B cell (primary cell): ENCODE measurements at regions of chr7 and their contacts with region 1.

Region 1: GRCh38 chr7:150368096-150368883 is at the start of gene REPIN1:
- DNase-seq: peak; percentile 89
- ATAC-seq: peak; percentile 49
- H3K4me3 ChIP-seq: peak within 1 kb of the TSS; percentile 62 to 98 (median 82)
- H3K4me3 Mint-ChIP-seq: peak within 1 kb of the TSS; percentile 92
- H3K27ac ChIP-seq: peak within 1 kb of the TSS; percentile 98 to 99
- H3K27ac Mint-ChIP-seq: peak within 1 kb of the TSS; percentile 98
- H3K4me1 ChIP-seq: peaks cover 57 to 72% of the 10 kb centered on the region in 2 donors
- H3K4me1 Mint-ChIP-seq: peaks cover 69% of the 10 kb centered on the region
- H3K27me3 ChIP-seq: no peaks in the 10 kb centered on the region
- H3K27me3 Mint-ChIP-seq: no peaks in the 10 kb centered on the region
- CTCF ChIP-seq: no peak
- total RNA-seq, gene REPIN1: 190 and 193 TPM in 2 replicates

Region 2: DNA sequence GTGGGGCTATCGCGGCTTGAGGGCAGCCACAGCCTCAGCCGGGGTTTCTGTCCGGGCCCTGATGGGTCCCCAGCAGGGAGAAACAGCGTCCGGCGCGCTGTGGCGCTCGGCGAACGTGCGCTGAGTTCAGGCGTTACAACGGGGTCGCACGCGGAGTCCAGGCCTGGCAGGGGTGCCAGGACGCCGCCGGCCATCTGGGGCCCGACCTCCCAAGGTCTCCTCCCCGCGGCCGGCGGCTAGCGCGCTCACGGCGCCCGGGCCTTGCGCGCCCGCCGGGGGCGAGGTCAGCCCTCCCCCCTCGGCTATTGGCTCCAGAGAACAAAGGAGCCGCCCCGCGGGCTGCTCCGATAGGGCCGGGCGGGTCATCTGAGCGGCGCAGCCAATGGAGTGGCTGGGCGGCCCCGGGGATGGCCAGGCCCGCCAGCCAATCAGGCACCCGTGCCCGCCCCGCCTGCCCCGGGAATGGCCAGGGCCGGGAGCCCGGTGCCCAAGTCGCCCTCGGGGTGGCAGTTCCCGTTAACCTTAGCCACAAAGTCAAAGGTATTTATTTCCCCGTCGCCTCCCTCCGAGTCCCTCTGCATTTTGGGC is 10.7 kb after region 1 on chr7 and contains the start of gene ZNF775:
- CTCF ChIA-PET with region 1: interaction called, 20 read pairs
- POLR2A ChIA-PET with region 1: interaction called, 64 read pairs
- intact Hi-C with region 1: loop called (anchors 1 kb)
- DNase-seq: peak; percentile 93
- ATAC-seq: peak; percentile 91
- H3K4me3 ChIP-seq: peak within 1 kb of the TSS; percentile 45 to 91 (median 77)
- H3K4me3 Mint-ChIP-seq: peak within 1 kb of the TSS; percentile 96
- H3K27ac ChIP-seq: peak within 1 kb of the TSS; percentile 84 to 85
- H3K27ac Mint-ChIP-seq: peak within 1 kb of the TSS; percentile 90
- H3K4me1 ChIP-seq: peaks cover 22 to 59% of the 10 kb centered on the region in 2 donors
- H3K4me1 Mint-ChIP-seq: peaks cover 71% of the 10 kb centered on the region
- H3K27me3 ChIP-seq: no peaks in the 10 kb centered on the region
- H3K27me3 Mint-ChIP-seq: no peaks in the 10 kb centered on the region
- CTCF ChIP-seq: peak; percentile 14
- total RNA-seq, gene ZNF775: 12.1 and 12.5 TPM in 2 replicates

Region 3: DNA sequence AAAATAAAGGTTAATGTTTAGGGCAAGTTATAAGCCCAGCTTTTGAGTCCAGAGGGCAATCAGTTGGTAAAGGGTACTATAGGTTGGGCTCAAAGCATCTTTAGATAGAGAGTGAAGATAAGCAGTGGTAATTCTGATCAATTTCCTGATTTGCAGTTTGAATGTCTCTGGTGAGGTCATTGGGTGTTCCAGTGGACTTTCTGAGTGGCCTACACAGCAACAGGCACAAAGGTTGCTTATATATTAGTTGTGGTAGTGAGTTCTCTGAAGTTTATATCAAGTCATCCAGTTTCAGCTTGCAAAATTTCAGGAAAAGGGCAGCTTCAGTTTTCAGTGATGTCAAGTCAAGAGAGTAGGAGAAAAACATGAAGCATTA is 398.0 kb after region 1 on chr7:
- CTCF ChIA-PET with region 1: no interaction called
- POLR2A ChIA-PET with region 1: no interaction called
- intact Hi-C with region 1: no loop called
- DNase-seq: no peak
- ATAC-seq: no peak
- H3K4me3 ChIP-seq: no peak overlapping the region
- H3K4me3 Mint-ChIP-seq: no peak overlapping the region
- H3K27ac ChIP-seq: no peak overlapping the region
- H3K27ac Mint-ChIP-seq: no peak overlapping the region
- H3K4me1 ChIP-seq: no peaks in the 10 kb centered on the region
- H3K4me1 Mint-ChIP-seq: no peaks in the 10 kb centered on the region
- H3K27me3 ChIP-seq: peaks cover 0 to 6% (median 2%) of the 10 kb centered on the region in 4 experiments
- H3K27me3 Mint-ChIP-seq: peaks cover 6% of the 10 kb centered on the region
- CTCF ChIP-seq: no peak

Region 4: DNA sequence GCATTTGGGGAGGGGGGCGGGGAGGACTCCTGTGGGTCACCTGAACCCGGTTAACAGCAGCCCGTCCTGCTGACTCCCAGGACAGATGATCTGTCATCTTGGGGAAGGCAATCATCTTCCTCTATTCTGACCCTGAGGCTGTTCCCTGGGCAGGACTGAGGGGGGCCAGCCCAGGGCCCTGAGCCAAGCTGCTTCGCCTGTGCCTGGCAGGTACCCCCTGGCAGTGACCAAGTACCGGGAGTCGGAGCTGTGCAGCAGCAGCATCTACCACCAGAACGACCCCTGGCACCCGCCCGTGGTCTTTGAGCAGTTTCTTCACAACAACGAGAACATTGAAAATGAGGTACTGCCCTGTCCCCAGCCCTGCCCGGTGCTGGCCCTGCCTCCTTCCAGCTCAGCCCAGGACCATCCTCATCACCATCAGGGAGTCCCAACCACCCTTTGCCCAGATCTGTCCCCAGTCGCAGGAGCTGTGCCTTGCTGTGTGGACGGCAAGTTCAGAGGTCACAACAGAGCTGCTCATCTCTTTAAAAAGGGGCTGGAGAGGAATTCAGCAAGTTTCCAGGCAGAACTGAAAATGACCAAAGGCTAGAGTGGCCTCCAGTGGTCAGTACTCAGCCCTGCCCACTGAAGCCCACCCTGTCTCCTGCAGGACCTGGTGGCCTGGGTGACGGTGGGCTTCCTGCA is 492.1 kb after region 1 on chr7:
- CTCF ChIA-PET with region 1: no interaction called
- POLR2A ChIA-PET with region 1: interaction called, 10 read pairs
- intact Hi-C with region 1: no loop called
- DNase-seq: no peak
- ATAC-seq: no peak
- H3K4me3 ChIP-seq: no peak overlapping the region
- H3K4me3 Mint-ChIP-seq: no peak overlapping the region
- H3K27ac ChIP-seq: no peak overlapping the region
- H3K27ac Mint-ChIP-seq: no peak overlapping the region
- H3K4me1 ChIP-seq: no peaks in the 10 kb centered on the region
- H3K4me1 Mint-ChIP-seq: no peaks in the 10 kb centered on the region
- H3K27me3 ChIP-seq: no peaks in the 10 kb centered on the region
- H3K27me3 Mint-ChIP-seq: peaks cover 18% of the 10 kb centered on the region
- CTCF ChIP-seq: no peak

Region 5: GRCh38 chr7:151057989-151058780 is 689.9 kb after region 1 on chr7:
- CTCF ChIA-PET with region 1: no interaction called
- POLR2A ChIA-PET with region 1: no interaction called
- intact Hi-C with region 1: loop called (anchors 2 kb)
- DNase-seq: peak; percentile 98
- ATAC-seq: peak; percentile 92
- H3K4me3 ChIP-seq: peak overlapping the region; percentile 67 to 90 (median 73)
- H3K4me3 Mint-ChIP-seq: peak overlapping the region; percentile 96
- H3K27ac ChIP-seq: peak overlapping the region; percentile 79 to 82
- H3K27ac Mint-ChIP-seq: peak overlapping the region; percentile 94
- H3K4me1 ChIP-seq: peaks cover 23 to 40% of the 10 kb centered on the region in 2 donors
- H3K4me1 Mint-ChIP-seq: peaks cover 36% of the 10 kb centered on the region
- H3K27me3 ChIP-seq: no peaks in the 10 kb centered on the region
- H3K27me3 Mint-ChIP-seq: no peaks in the 10 kb centered on the region
- CTCF ChIP-seq: no peak